Naive thymus-derived CD8-positive, alpha-beta T cell (primary cell): ENCODE measurements at regions of chr2 and their contacts with region 1.

Region 1: DNA sequence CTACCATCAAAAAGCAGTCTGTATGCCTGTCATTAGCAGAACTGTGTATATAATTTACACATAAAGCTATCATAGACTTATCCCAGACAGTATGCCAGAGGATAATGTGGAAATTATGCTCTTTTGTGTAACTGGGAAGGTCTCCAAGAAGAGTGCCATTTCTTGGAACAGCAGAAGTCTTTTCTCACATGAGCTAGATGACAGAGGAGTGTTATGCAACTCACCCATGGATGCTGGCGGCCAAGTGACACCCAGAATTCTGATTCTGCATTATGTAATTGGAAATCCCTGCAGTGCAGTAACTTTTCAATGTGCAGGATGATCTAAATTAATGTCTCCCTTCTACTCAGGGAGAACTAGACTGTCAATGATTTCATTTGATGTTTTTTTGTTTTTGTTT is 160.0 kb downstream of the UBE2E3 start:
- DNase-seq: peak in 1 of 10 donors; percentile 14
- ATAC-seq: peak; percentile 12 to 13
- H3K4me3 Mint-ChIP-seq: peak overlapping the region in 9 of 10 donors; percentile 49 to 92 (median 77)
- H3K27ac Mint-ChIP-seq: peak overlapping the region; percentile 93 to 99 (median 96)
- H3K4me1 Mint-ChIP-seq: peaks cover 31 to 79% (median 70%) of the 10 kb centered on the region in 4 donors
- H3K27me3 Mint-ChIP-seq: no peaks in the 10 kb centered on the region

Region 2: GRCh38 chr2:181036848-181037603 is 103.4 kb before region 1 on chr2:
- POLR2A ChIA-PET with region 1: no interaction called
- DNase-seq: no peak
- ATAC-seq: no peak
- H3K4me3 Mint-ChIP-seq: no peak overlapping the region
- H3K27ac Mint-ChIP-seq: no peak overlapping the region
- H3K4me1 Mint-ChIP-seq: peaks cover 6 to 21% (median 16%) of the 10 kb centered on the region in 4 donors
- H3K27me3 Mint-ChIP-seq: no peaks in the 10 kb centered on the region

Region 3: GRCh38 chr2:181123798-181124231 is 16.6 kb before region 1 on chr2:
- POLR2A ChIA-PET with region 1: interaction called, 62 read pairs
- DNase-seq: peak; percentile 8 to 89 (median 78)
- ATAC-seq: peak; percentile 90 to 98
- H3K4me3 Mint-ChIP-seq: peak overlapping the region; percentile 61 to 91 (median 81)
- H3K27ac Mint-ChIP-seq: peak overlapping the region; percentile 96 to 100 (median 98)
- H3K4me1 Mint-ChIP-seq: peaks cover 23 to 74% (median 65%) of the 10 kb centered on the region in 4 donors
- H3K27me3 Mint-ChIP-seq: no peaks in the 10 kb centered on the region

Region 4: GRCh38 chr2:181152701-181153100 is 12.3 kb after region 1 on chr2:
- POLR2A ChIA-PET with region 1: interaction called, 11 read pairs
- DNase-seq: no peak
- ATAC-seq: no peak
- H3K4me3 Mint-ChIP-seq: peak overlapping the region in 8 of 10 donors; percentile 14 to 67 (median 44)
- H3K27ac Mint-ChIP-seq: peak overlapping the region; percentile 4 to 93 (median 83)
- H3K4me1 Mint-ChIP-seq: peaks cover 23 to 55% (median 48%) of the 10 kb centered on the region in 4 donors
- H3K27me3 Mint-ChIP-seq: no peaks in the 10 kb centered on the region

Region 5: GRCh38 chr2:181319286-181319685 is 178.9 kb after region 1 on chr2:
- POLR2A ChIA-PET with region 1: no interaction called
- DNase-seq: no peak
- ATAC-seq: no peak
- H3K4me3 Mint-ChIP-seq: no peak overlapping the region
- H3K27ac Mint-ChIP-seq: no peak overlapping the region
- H3K4me1 Mint-ChIP-seq: peaks cover 12 to 34% (median 16%) of the 10 kb centered on the region in 4 donors
- H3K27me3 Mint-ChIP-seq: no peaks in the 10 kb centered on the region

Region 6: DNA sequence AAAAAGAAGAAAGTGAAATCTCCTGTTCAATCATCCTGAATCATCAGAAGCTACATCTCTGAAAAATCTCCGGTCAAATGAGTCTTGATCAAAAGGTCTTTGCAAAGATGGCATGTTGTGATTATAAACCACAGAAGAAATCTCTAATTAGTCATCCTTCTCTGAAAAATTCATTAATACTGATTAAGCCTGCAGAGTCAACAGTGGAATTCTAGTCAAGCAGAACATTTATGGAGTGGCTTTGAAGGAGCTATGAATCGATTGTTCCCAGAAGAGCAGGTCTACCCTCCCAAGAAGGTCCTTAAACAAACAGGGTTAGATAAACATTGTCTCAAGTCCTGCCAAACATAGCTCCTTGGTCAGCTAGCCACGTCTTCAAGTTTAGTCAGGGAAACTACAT is 405.6 kb after region 1 on chr2:
- POLR2A ChIA-PET with region 1: no interaction called
- DNase-seq: no peak
- ATAC-seq: no peak
- H3K4me3 Mint-ChIP-seq: no peak overlapping the region
- H3K27ac Mint-ChIP-seq: no peak overlapping the region
- H3K4me1 Mint-ChIP-seq: peaks cover 0 to 6% (median 2%) of the 10 kb centered on the region in 4 donors
- H3K27me3 Mint-ChIP-seq: no peaks in the 10 kb centered on the region